ENCODE measurements at regions of chr2 and their contacts with region 1.

Region 1: DNA sequence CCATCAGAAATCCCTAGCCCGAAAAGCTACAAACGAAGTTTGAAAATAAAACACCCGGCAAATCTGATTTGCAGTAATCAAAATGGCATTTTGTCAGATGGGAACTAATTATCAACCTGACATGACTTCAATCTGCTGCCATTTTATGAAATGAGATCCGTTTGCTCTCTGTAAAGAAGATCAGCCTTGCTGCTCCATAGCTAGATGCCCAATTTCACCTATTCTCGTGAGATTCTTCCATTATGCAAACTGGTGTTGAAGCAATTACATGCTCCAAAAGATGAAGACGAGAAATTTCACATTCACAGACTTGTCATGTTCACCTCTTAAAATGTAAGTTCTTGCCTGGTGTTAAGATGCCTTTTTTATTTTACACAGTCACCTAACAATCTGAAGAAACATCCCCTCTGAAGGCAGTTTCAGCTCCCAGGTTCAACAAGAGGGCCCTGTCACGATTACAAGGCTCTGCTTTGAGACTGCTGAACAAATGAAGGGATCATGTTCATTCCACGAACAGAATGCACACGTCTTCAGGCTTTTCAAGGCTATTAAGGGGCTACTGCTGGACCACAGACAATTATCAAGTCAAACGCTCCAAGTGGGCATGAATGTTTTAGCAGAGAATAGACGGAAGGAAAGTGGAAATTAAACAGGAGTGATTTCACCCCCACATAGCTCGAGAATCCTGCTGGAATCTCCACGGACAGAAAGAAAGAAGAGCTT is 172.6 kb upstream of the PID1 start:
- DNase-seq: peak in 1 of 42 donors; percentile 14

Region 2: GRCh38 chr2:229714736-229715541 is 271.2 kb after region 1 on chr2:
- intact Hi-C with region 1: loop called (anchors 5 kb)
- DNase-seq: peak; percentile 23 to 88 (median 68)